SK-N-SH (cell line): ENCODE measurements at regions of chr1 and their contacts with region 1.

Region 1: DNA sequence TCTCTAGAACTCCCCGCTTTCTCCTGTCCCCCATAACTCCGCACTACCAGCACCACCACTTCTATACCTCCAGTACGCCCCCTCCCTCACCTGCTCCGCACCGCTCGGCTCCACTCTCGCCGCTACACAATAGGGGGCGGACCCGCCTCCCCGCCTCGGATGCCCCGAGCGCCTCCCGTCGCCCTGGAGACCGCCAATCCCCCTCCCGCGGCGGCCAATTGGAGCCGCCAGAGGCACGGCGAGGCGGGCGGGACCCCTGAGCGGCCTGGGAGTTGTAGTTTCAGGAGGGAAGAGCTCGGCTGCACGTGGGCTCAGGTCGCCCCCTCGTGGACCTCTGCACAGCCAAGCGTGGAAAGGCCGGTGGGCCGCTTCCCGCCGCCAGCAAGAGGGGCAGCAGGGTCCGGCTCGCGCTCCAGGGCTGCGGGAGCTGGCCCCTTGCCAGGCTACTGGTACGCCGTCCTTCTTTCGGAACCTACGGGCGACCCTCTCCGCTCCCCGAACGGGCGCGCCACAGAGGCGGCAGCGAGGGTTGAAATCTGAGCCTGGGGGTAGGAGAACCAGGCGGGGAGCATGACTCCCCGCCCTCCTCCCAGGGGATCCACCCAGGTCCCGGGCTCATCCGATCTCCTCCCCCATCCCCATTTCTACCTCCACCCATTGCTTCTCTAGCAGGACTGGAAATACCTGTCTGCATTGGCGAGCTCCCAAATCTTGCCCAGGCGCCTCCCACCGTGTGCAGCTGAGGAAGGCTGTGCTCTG is at the start of gene IGSF9:
- DNase-seq: peak; percentile 95
- H3K4me3 ChIP-seq: peak within 1 kb of the TSS; percentile 68 to 72
- H3K27ac ChIP-seq: no peak within 1 kb of the TSS; a peak in 1 of 4 replicates
- H3K4me1 ChIP-seq: peaks cover 0 to 36% of the 10 kb centered on the region in 2 experiments; a peak in 1 of 4 replicates
- H3K27me3 ChIP-seq: no peaks in the 10 kb centered on the region; the same call in 1 of the 2 replicates
- CTCF ChIP-seq: peak; percentile 66
- EP300 ChIP-seq: no peak
- RAD21 ChIP-seq: peak; percentile 61
- polyA plus RNA-seq, gene IGSF9: 0.86 and 2.4 TPM in 2 replicates

Region 2: GRCh38 chr1:159913451-159914192 is 32.0 kb before region 1 on chr1:
- CTCF ChIA-PET with region 1: no interaction called
- POLR2A ChIA-PET with region 1: no interaction called
- DNase-seq: no peak
- H3K4me3 ChIP-seq: no peak overlapping the region
- H3K27ac ChIP-seq: peak overlapping the region in 1 of 2 experiments; percentile 86; a peak in 2 of 4 replicates
- H3K4me1 ChIP-seq: peaks cover 27 to 73% of the 10 kb centered on the region in 2 experiments; a peak in 3 of 4 replicates
- H3K27me3 ChIP-seq: no peaks in the 10 kb centered on the region
- CTCF ChIP-seq: no peak
- EP300 ChIP-seq: no peak
- RAD21 ChIP-seq: no peak

Region 3: GRCh38 chr1:159960721-159961381 is 15.2 kb after region 1 on chr1:
- CTCF ChIA-PET with region 1: interaction called, 20 read pairs
- POLR2A ChIA-PET with region 1: no interaction called
- DNase-seq: no peak
- H3K4me3 ChIP-seq: no peak overlapping the region; a peak in 1 of 4 replicates
- H3K27ac ChIP-seq: peak overlapping the region in 1 of 2 experiments; percentile 12; a peak in 1 of 4 replicates
- H3K4me1 ChIP-seq: no peaks in the 10 kb centered on the region
- H3K27me3 ChIP-seq: peaks cover 17% of the 10 kb centered on the region; the same call in 1 of the 2 replicates
- CTCF ChIP-seq: no peak
- EP300 ChIP-seq: no peak
- RAD21 ChIP-seq: no peak

Region 4: GRCh38 chr1:160018900-160019299 is 73.2 kb after region 1 on chr1:
- CTCF ChIA-PET with region 1: interaction called, 10 read pairs
- POLR2A ChIA-PET with region 1: no interaction called
- DNase-seq: no peak
- H3K4me3 ChIP-seq: no peak overlapping the region
- H3K27ac ChIP-seq: peak overlapping the region in 1 of 2 experiments; percentile 29; a peak in 1 of 4 replicates
- H3K4me1 ChIP-seq: peaks cover 5 to 12% of the 10 kb centered on the region in 2 experiments; a peak in 3 of 4 replicates
- H3K27me3 ChIP-seq: no peaks in the 10 kb centered on the region
- CTCF ChIP-seq: no peak
- EP300 ChIP-seq: no peak
- RAD21 ChIP-seq: no peak

Region 5: GRCh38 chr1:160040476-160040875 is 94.8 kb after region 1 on chr1:
- CTCF ChIA-PET with region 1: no interaction called
- POLR2A ChIA-PET with region 1: no interaction called
- DNase-seq: no peak
- H3K4me3 ChIP-seq: no peak overlapping the region
- H3K27ac ChIP-seq: no peak overlapping the region
- H3K4me1 ChIP-seq: no peaks in the 10 kb centered on the region
- H3K27me3 ChIP-seq: peaks cover 13% of the 10 kb centered on the region; the same call in 1 of the 2 replicates
- CTCF ChIP-seq: no peak
- EP300 ChIP-seq: no peak
- RAD21 ChIP-seq: no peak